B cell (primary cell): ENCODE measurements at regions of chr2 and their contacts with region 1.

Region 1: GRCh38 chr2:177263451-177264208 is 897 bp downstream of the NFE2L2 start:
- DNase-seq: peak; percentile 98
- ATAC-seq: peak; percentile 48
- H3K4me3 ChIP-seq: peak overlapping the region; percentile 67 to 97 (median 92)
- H3K4me3 Mint-ChIP-seq: peak overlapping the region; percentile 98
- H3K27ac ChIP-seq: peak overlapping the region; percentile 99 to 100
- H3K27ac Mint-ChIP-seq: peak overlapping the region; percentile 98
- H3K4me1 ChIP-seq: peaks cover 34% of the 10 kb centered on the region in 2 donors
- H3K4me1 Mint-ChIP-seq: peaks cover 50% of the 10 kb centered on the region
- H3K27me3 ChIP-seq: no peaks in the 10 kb centered on the region
- H3K27me3 Mint-ChIP-seq: no peaks in the 10 kb centered on the region
- CTCF ChIP-seq: peak; percentile 88

Region 2: DNA sequence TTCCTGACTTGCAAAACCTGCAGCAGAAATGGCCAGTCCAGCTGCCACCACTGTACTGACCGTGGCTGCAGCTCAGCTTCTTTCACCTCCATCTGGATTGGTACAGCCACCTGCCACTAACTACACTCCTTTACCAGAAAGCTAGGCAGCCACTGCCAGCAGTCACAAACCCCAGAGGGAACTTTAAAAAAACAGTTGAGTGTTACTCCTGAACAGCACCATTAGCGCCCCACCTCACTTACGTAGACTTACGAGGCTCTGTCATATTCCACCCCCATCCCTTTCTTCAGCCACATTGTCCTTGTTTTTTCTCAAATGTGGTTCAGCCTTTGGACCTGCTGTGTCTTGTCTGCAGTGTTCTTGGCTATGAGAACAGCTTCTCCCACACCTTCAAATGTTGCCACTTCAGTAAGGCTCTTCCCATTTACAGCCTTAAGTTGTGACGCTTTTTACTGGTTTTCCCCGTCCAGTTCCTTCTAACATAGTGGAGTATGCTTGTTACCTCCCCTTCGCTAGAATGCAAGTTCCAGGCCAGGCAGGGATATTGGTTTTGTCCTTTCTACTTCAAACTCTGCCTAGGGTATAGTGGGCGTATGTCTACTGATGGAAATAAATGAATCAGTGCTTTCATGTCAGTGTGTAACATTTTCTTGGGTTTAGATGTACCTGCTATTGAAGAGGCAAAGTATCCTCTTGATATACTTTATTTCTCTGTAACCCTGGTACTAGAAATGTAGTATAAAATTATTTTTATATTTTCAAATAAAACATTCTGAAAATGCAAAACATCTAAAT is 34.0 kb before region 1 on chr2:
- CTCF ChIA-PET with region 1: interaction called, 22 read pairs
- POLR2A ChIA-PET with region 1: interaction called, 6 read pairs
- intact Hi-C with region 1: no loop called
- DNase-seq: no peak
- ATAC-seq: no peak
- H3K4me3 ChIP-seq: no peak overlapping the region
- H3K4me3 Mint-ChIP-seq: no peak overlapping the region
- H3K27ac ChIP-seq: peak overlapping the region in 1 of 2 donors; percentile 2
- H3K27ac Mint-ChIP-seq: no peak overlapping the region
- H3K4me1 ChIP-seq: no peaks in the 10 kb centered on the region
- H3K4me1 Mint-ChIP-seq: peaks cover 20% of the 10 kb centered on the region
- H3K27me3 ChIP-seq: no peaks in the 10 kb centered on the region
- H3K27me3 Mint-ChIP-seq: no peaks in the 10 kb centered on the region
- CTCF ChIP-seq: no peak

Region 3: DNA sequence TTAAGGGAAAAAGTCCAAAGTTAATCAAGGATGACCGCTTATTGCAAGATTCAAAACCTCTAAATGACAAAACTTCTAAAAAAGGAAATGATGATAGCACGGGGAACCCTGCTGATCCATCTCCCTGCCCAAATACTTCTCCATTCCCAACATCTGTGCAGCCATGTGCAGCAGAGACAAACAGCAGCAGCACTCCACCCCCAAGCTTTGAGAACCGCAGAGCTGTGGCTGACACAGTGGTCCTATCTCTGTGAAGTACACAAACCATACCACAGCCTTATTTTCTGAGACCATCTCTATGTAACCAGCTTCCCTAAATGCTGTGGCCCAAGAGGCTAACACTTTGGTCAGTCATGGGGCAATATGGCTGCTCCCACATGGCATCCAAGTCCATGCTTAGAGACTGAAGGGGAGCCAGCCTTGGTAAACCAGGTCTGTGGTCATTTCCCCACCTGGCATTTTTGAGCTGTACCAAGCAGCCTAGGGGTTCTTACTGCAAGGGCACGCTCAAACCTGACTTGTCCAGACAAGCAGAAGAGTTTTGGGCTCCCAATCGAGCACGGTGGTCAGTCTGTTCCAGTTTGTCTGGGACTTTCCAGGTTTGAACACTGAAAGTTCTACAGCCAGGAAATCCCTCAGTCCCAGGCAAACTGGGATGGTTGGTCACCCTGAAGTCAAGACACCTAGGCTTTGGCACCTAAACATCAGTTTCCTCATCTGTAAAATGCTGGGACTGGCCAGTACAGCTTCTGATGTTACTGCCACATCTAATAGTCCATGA is 18.0 kb after region 1 on chr2:
- CTCF ChIA-PET with region 1: interaction called, 15 read pairs
- POLR2A ChIA-PET with region 1: interaction called, 15 read pairs
- intact Hi-C with region 1: loop called (anchors 2 kb)
- DNase-seq: peak; percentile 53
- ATAC-seq: peak; percentile 68
- H3K4me3 ChIP-seq: no peak overlapping the region
- H3K4me3 Mint-ChIP-seq: peak overlapping the region; percentile 40
- H3K27ac ChIP-seq: no peak overlapping the region
- H3K27ac Mint-ChIP-seq: peak overlapping the region; percentile 82
- H3K4me1 ChIP-seq: peaks cover 14 to 27% of the 10 kb centered on the region in 2 donors
- H3K4me1 Mint-ChIP-seq: peaks cover 34% of the 10 kb centered on the region
- H3K27me3 ChIP-seq: no peaks in the 10 kb centered on the region
- H3K27me3 Mint-ChIP-seq: no peaks in the 10 kb centered on the region
- CTCF ChIP-seq: no peak

Region 4: DNA sequence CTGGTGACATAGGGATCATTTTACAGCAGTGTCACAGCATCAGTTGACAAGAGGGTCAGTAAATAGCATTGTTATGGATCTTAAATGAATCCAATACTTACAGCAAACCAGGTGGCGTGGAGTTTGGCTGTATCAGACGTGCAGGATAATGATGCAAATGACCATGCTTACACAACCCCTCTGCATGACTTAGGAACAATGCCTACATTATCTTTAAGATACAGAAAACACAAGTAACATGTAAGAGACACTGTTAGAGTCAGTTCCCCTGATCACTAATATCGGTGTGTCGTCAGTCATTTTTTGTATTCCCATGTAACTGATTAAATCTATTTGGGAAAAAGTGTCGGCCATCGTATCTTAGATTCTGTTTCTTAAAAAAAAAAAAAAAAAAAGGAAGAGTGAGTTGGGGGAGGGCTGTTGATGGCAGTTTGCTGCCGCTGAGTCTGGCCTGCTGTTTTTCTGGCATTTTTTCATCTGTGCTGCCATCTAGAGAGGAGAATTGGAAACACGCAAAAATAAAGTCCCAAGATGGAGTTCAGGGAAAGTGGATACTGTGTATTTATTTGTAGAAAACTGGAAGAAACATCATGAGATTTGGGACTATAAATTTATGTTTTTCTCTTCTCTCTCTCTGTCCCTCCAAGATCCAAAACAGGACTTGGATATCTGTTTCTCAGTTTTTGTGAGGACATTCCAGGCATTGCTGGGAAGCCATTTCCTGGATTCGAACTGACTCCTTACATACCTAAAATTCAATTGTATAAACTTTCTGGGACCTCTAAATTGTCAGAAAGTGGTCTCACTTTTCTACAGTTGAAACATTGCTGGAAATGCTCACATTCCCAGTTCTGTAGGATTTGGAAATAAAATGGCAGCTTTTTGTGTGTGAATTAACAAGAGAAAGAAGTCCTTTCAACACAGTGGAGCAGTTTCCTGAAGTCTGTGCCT is 68.7 kb after region 1 on chr2:
- CTCF ChIA-PET with region 1: interaction called, 40 read pairs
- POLR2A ChIA-PET with region 1: interaction called, 4 read pairs
- intact Hi-C with region 1: loop called (anchors 1 kb)
- DNase-seq: peak; percentile 82
- ATAC-seq: peak; percentile 85
- H3K4me3 ChIP-seq: no peak overlapping the region
- H3K4me3 Mint-ChIP-seq: no peak overlapping the region
- H3K27ac ChIP-seq: no peak overlapping the region
- H3K27ac Mint-ChIP-seq: no peak overlapping the region
- H3K4me1 ChIP-seq: peaks cover 4 to 5% of the 10 kb centered on the region in 2 donors
- H3K4me1 Mint-ChIP-seq: peaks cover 8% of the 10 kb centered on the region
- H3K27me3 ChIP-seq: no peaks in the 10 kb centered on the region
- H3K27me3 Mint-ChIP-seq: no peaks in the 10 kb centered on the region
- CTCF ChIP-seq: peak; percentile 77

Region 5: DNA sequence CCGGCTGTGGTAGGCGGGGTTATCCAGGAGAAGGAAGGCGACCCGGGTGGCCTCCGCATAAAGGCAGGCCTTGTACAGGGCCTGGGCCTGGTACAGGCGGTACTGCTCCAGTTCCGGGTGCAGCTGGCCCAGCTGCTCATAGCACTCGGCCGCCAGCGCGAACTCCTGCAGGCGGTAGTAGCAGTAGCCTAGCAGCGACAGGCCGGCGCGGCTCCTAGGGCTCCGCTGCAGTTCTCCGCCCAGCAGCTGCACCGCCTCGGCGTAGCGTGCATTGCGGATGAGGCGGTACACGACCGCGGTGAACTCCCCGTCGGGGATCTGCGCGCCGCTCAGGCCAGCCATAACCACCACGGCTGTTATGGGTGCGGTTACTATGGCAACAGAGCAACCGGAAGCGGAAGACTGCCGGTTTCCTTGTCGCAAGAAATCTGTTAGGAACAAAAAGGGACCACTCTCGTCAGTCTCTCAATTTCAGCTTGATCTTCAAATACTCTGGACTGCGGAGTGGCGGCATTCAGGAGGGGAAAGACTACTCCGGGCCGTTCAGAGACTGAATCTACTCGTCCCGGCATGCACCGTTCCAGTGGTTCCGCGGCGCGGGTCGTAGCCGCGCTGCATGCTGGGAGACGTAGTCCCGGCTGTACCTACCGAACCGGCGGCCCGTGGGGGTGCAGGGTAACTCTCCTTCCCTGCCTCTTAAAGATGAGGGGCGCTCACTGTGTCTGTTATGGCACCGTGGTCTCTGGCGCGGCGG is 289.0 kb after region 1 on chr2:
- CTCF ChIA-PET with region 1: no interaction called
- POLR2A ChIA-PET with region 1: interaction called, 4 read pairs
- intact Hi-C with region 1: loop called (anchors 2 kb)
- DNase-seq: peak; percentile 98
- ATAC-seq: peak; percentile 92
- H3K4me3 ChIP-seq: peak overlapping the region; percentile 63 to 98 (median 94)
- H3K4me3 Mint-ChIP-seq: peak overlapping the region; percentile 97
- H3K27ac ChIP-seq: peak overlapping the region; percentile 99 to 100
- H3K27ac Mint-ChIP-seq: peak overlapping the region; percentile 100
- H3K4me1 ChIP-seq: peaks cover 9 to 13% of the 10 kb centered on the region in 2 donors
- H3K4me1 Mint-ChIP-seq: peaks cover 19% of the 10 kb centered on the region
- H3K27me3 ChIP-seq: no peaks in the 10 kb centered on the region
- H3K27me3 Mint-ChIP-seq: no peaks in the 10 kb centered on the region
- CTCF ChIP-seq: no peak